GM12878 (cell line): ENCODE measurements at regions of chr10 and their contacts with region 1.

Region 1: GRCh38 chr10:90857635-90858460 is at the start of gene HTR7:
- DNase-seq: no peak
- ATAC-seq: peak; percentile 83
- H3K4me3 ChIP-seq: peak within 1 kb of the TSS; percentile 58; the same call in 1 of the 2 replicates
- H3K27ac ChIP-seq: no peak within 1 kb of the TSS
- H3K4me1 ChIP-seq: 0 out of 2 replicates have a peak, but pooled peaks cover 3% of the 10 kb centered on the region
- H3K27me3 ChIP-seq: peaks cover 0 to 10% of the 10 kb centered on the region in 2 experiments; a peak in 3 of 4 replicates
- CTCF ChIP-seq: peak; percentile 40 to 45 (median 43); a peak in 4 of 6 replicates
- EP300 ChIP-seq: no peak
- POLR2A ChIP-seq: no peak
- RAD21 ChIP-seq: no peak
- polyA plus RNA-seq, gene HTR7: 0.04 to 0.06 TPM

Region 2: DNA sequence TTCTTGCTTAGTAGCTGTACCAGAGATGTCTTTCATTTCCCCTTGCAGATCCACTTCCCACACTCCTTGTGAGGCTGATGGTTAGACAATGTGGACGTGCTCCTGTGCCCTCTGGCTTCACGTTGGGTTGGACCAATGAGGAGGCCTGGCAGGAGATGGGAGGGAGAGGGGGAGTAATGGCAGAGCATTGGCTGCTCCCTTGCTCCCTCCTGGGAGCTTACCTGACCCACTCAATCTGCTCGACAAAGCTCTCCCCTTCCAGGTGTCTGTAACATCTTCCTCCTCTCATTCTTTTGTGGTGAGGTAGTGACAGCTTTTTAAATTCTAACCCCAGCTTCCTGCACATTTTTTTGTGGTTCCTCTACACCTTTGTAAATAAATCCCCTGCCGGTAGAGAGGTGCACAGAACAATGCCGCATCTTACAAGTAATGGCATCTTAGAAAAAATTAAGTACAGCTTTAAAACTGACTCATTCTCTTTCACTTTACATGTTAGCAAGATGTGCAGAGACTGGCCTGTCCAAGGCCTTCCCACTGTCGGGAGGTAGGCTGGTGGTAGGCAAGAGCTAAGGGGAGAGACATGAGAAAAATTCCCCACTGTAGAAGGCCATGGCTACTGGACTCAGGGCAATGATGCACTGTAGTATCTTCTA is 134.3 kb before region 1 on chr10:
- CTCF ChIA-PET with region 1: no interaction called
- POLR2A ChIA-PET with region 1: no interaction called
- RAD21 ChIA-PET with region 1: no interaction called
- SMC1A ChIA-PET with region 1: no interaction called
- in situ Hi-C with region 1: no loop called
- intact Hi-C with region 1: no loop called
- DNase-seq: no peak
- ATAC-seq: peak; percentile 56
- H3K4me3 ChIP-seq: no peak overlapping the region
- H3K27ac ChIP-seq: no peak overlapping the region
- H3K4me1 ChIP-seq: no peaks in the 10 kb centered on the region
- H3K27me3 ChIP-seq: no peaks in the 10 kb centered on the region
- CTCF ChIP-seq: no peak
- EP300 ChIP-seq: no peak
- POLR2A ChIP-seq: no peak
- RAD21 ChIP-seq: no peak

Region 3: DNA sequence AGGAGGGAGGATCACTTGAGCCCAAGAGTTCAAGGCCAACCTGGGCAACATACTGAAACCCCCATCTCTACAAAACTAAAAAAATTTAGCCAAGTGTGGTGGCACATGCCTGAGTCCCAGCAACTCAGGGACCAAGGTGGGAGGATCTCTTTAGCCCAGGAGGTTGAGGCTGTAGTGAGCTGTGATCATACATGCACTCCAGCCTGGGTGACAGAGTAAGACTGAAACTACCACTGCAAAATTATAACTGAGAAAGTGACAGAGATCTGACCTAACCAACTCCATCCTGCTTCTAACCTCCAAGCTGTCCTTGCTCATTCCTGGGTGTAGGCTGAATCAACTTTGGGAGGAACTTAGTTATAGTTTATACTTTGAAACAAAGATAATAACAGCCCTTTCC is 59.4 kb before region 1 on chr10:
- CTCF ChIA-PET with region 1: no interaction called
- POLR2A ChIA-PET with region 1: no interaction called
- RAD21 ChIA-PET with region 1: no interaction called
- SMC1A ChIA-PET with region 1: no interaction called
- in situ Hi-C with region 1: no loop called
- intact Hi-C with region 1: loop called (anchors 10 kb)
- DNase-seq: no peak
- ATAC-seq: peak; percentile 89
- H3K4me3 ChIP-seq: no peak overlapping the region
- H3K27ac ChIP-seq: no peak overlapping the region
- H3K4me1 ChIP-seq: no peaks in the 10 kb centered on the region
- H3K27me3 ChIP-seq: no peaks in the 10 kb centered on the region
- CTCF ChIP-seq: no peak
- EP300 ChIP-seq: no peak
- POLR2A ChIP-seq: no peak
- RAD21 ChIP-seq: no peak